Colonic mucosa (tissue), 4 donors: ENCODE measurements at regions of chr2 and their contacts with region 1.

Region 1: GRCh38 chr2:63856303-63856603 is 14.6 kb downstream of the UGP2 start:
- DNase-seq: no peak
- H3K4me3 ChIP-seq: no peak overlapping the region
- H3K27ac ChIP-seq: no peak overlapping the region
- H3K4me1 ChIP-seq: no peaks in the 10 kb centered on the region
- H3K27me3 ChIP-seq: no peaks in the 10 kb centered on the region
- CTCF ChIP-seq: no peak

Region 2: GRCh38 chr2:63692002-63692606 is 164.1 kb before region 1 on chr2:
- intact Hi-C with region 1: loop called (anchors 5 kb)
- DNase-seq: peak; percentile 31
- H3K4me3 ChIP-seq: no peak overlapping the region
- H3K27ac ChIP-seq: no peak overlapping the region
- H3K4me1 ChIP-seq: no peaks in the 10 kb centered on the region
- H3K27me3 ChIP-seq: no peaks in the 10 kb centered on the region
- CTCF ChIP-seq: peak; percentile 43

Region 3: GRCh38 chr2:63755965-63756364 is 100.3 kb before region 1 on chr2:
- intact Hi-C with region 1: no loop called
- DNase-seq: no peak
- H3K4me3 ChIP-seq: no peak overlapping the region
- H3K27ac ChIP-seq: no peak overlapping the region
- H3K4me1 ChIP-seq: no peaks in the 10 kb centered on the region
- H3K27me3 ChIP-seq: no peaks in the 10 kb centered on the region
- CTCF ChIP-seq: no peak